ENCODE measurements at regions of chr9 and their contacts with region 1.

Region 1: DNA sequence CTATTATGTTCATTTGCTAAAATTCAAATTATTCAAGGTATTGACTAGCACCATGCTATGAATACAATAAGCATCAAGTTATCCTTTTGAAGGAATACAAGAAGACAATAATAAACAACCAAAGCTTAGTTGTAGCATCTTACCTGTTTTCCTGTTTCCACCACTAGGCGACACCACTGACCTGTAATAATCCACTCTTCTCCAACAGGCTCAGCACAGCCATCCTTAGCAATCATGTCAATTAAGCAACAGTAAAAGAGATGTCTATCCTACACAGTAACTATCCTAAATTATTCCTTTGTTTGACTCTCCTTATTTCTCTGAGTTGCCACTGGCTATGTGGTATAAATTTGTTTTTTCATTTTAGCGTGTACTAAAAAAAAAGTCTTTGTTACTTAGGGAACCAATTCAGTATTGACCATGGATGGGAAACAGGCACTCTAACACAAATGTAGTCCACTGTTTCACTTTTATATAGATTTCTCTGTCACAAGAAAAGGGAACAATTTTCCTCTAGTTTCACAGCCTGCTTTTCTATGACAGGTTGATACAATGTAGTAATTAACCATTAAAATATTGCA is 46.2 kb downstream of the PCA3 start:
- DNase-seq: peak; percentile 29
- ATAC-seq: peak in 1 of 2 donors; percentile 86

Region 2: GRCh38 chr9:76516350-76516749 is 294.1 kb before region 1 on chr9:
- intact Hi-C with region 1: no loop called
- DNase-seq: peak; percentile 29
- ATAC-seq: peak; percentile 39 to 47

Region 3: DNA sequence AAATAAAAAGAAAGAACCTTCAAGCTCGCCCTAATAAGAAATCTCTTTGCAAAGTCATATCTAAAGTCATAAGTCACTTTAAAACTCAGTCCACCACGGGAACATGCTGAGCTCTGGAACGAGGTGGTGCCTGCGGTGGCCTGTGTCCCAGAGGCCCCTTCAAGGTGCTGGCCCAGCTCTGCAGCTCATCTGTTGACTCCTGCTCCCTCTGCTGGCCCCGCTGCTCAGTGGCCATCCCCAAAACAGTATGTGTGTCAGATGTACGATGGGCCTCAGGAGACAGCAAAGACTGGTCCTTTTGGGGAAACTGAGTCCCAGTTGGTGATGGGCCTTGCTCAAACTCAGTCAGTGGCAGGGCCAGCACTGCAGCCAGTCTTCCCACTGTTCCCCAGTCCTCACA is 186.2 kb after region 1 on chr9:
- intact Hi-C with region 1: loop called in 1 of 2 experiments (anchors 2 kb)
- DNase-seq: peak; percentile 58
- ATAC-seq: peak; percentile 88 to 94

Region 4: DNA sequence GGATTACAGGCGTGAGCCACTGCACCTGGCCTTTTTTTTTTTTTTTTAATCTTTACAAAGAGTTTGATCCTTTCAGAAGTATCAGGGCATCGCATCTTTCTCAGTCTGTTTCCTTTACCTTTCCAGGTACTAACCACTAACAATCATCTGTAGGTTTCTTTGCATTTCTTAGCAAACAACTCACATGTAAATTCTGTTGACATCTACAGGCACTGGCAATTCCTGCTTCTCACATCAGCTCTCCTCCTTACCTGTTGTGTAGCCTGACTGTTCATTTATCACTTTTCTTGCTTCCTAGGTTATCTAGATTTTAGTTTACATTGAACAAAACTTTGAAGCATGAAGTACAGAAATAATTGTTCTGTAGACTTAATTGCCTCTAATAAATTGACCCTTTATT is 339.4 kb after region 1 on chr9:
- intact Hi-C with region 1: loop called in 1 of 2 experiments (anchors 5 kb)
- DNase-seq: no peak
- ATAC-seq: no peak

Measured in left cardiac atrium (tissue), 4 donors.